ENCODE measurements at regions of chr6 and their contacts with region 1.

Region 1: DNA sequence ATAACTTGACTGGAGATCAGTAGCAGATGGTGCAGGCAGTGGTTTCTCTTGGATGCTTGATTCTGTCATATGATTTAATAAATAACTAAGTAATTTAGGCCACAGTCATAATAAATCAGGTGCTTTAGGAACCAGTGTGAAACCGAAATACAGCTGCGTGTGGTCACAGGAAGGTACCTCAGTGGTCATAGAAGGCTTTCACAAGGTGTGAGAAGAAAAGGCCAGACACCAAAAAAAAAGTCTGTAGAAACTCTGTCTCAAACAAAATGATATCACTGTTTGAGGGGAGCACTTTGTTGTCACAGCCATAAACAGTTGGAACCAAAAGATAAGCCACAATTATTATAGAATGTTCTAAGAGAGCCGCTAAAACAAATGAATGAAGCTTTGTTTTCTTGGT is 56.5 kb downstream of the ARMC2 start:
- DNase-seq: peak; percentile 90
- H3K4me3 ChIP-seq: peak overlapping the region; percentile 39
- H3K27ac ChIP-seq: peak overlapping the region; percentile 65
- H3K4me1 ChIP-seq: peaks cover 60% of the 10 kb centered on the region
- CTCF ChIP-seq: no peak

Region 2: GRCh38 chr6:108260809-108261569 is 643.8 kb before region 1 on chr6 and contains the start of gene SNX3:
- CTCF ChIA-PET with region 1: no interaction called
- POLR2A ChIA-PET with region 1: no interaction called
- intact Hi-C with region 1: loop called (anchors 10 kb)
- DNase-seq: peak; percentile 95
- H3K4me3 ChIP-seq: peak within 1 kb of the TSS; percentile 95
- H3K27ac ChIP-seq: peak within 1 kb of the TSS; percentile 73
- H3K4me1 ChIP-seq: peaks cover 47% of the 10 kb centered on the region
- CTCF ChIP-seq: peak; percentile 19; the same call in 1 of the 2 replicates
- total RNA-seq, gene SNX3: 67.9 and 72.9 TPM in 2 replicates

Region 3: GRCh38 chr6:109623288-109623687 is 718.5 kb after region 1 on chr6:
- CTCF ChIA-PET with region 1: no interaction called
- POLR2A ChIA-PET with region 1: no interaction called
- intact Hi-C with region 1: no loop called
- DNase-seq: no peak
- H3K4me3 ChIP-seq: no peak overlapping the region
- H3K27ac ChIP-seq: no peak overlapping the region
- H3K4me1 ChIP-seq: no peaks in the 10 kb centered on the region
- CTCF ChIP-seq: no peak